ENCODE measurements at regions of chr11 and their contacts with region 1.

Region 1: GRCh38 chr11:126194121-126194543 is 17.3 kb downstream of the RPUSD4 start:
- DNase-seq: no peak
- ATAC-seq: peak; percentile 61
- H3K4me3 ChIP-seq: no peak overlapping the region
- H3K27ac ChIP-seq: no peak overlapping the region
- H3K4me1 ChIP-seq: no peaks in the 10 kb centered on the region
- H3K27me3 ChIP-seq: no peaks in the 10 kb centered on the region

Region 2: DNA sequence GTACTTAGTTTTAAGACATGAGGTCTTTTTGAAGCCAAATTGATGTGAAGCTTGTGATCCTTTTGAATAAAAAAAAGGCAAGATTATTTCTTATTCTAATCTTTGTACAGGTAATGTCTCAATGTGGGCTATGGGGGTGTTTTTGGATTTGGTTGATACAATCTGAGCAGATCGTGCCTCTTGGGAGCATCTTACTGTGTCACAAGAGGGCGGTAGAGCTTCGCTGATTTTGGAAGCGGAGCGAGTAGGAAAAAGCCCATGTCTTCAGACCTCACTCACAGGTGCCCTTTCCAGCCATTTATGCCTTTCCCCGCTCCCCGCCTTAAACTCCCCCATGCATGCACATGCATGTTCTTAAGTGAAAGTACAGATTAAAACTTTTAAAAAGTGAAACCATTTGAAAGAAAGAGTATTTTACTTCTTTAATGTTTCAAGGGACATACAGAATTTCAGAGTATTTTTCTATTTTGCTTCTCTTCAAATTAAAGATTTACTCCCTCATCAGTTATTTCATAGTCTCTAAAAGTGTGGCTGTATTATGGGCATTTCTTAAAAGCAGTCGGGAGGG is 271.0 kb before region 1 on chr11:
- intact Hi-C with region 1: loop called (anchors 1 to 2 kb)
- DNase-seq: no peak
- ATAC-seq: peak; percentile 76
- H3K4me3 ChIP-seq: no peak overlapping the region
- H3K27ac ChIP-seq: no peak overlapping the region
- H3K4me1 ChIP-seq: no peaks in the 10 kb centered on the region
- H3K27me3 ChIP-seq: no peaks in the 10 kb centered on the region

Region 3: DNA sequence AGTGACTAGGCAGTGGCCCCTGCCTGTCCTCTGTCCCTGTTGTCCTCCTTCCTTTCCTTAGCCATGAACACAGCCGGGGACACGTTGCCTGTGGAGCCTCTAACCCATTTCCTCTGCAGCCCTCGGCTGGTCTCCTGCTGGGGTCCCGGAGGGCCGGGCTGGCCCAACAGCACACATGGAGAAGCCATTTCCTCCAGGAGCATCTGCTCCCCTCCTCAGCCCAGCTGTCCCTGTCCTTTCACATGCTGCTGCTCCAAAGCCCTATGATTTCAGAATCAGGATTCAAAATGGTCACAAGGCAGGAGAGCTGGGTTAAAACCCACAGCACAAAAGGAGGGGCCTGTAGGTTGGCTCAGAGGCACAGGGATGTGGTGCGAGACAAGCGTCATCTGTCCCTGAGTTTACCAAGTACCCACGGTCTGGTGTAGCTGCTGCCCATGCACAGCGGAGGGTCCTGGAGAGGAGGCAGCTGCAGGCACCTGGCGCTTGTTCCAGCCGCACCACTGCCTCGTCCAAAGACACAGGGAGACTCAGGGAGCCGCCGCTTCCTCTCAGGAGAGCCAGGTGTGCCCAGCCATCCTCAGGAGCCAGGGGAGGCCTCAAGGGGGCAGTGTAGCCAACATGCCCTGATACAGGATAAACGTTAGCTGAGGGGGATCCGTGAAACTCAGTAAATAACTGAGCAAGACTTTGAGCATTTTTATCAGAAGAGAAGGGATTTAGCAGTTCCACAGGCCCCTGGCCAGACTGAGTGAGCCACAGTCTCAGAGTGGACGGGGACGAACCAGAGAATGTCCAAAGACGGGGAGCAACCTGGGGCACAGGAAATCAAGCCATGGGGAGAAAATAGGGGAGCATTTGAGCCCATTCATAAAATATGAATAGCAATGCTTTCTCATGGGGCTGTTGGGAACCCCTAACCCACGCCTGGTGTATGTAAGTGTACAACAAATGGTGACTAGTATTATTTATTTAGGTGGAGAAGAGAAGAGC is 252.2 kb before region 1 on chr11:
- intact Hi-C with region 1: loop called in 1 of 2 experiments (anchors 1 kb)
- DNase-seq: peak; percentile 55 to 79
- ATAC-seq: no peak
- H3K4me3 ChIP-seq: no peak overlapping the region
- H3K27ac ChIP-seq: no peak overlapping the region
- H3K4me1 ChIP-seq: no peaks in the 10 kb centered on the region
- H3K27me3 ChIP-seq: no peaks in the 10 kb centered on the region

Measured in aorta (tissue), 5 donors.